ENCODE measurements at regions of chr2 and their contacts with region 1.

Region 1: GRCh38 chr2:219029829-219030165 is 11.5 kb downstream of the CFAP65 start:
- H3K4me3 ChIP-seq: no peak overlapping the region
- H3K27ac ChIP-seq: no peak overlapping the region
- H3K4me1 ChIP-seq: no peaks in the 10 kb centered on the region
- CTCF ChIP-seq: peak; percentile 93

Region 2: GRCh38 chr2:218995972-218996711 is 33.7 kb before region 1 on chr2:
- CTCF ChIA-PET with region 1: interaction called, 15 read pairs
- POLR2A ChIA-PET with region 1: no interaction called
- H3K4me3 ChIP-seq: peak overlapping the region; percentile 27
- H3K27ac ChIP-seq: no peak overlapping the region
- H3K4me1 ChIP-seq: no peaks in the 10 kb centered on the region
- CTCF ChIP-seq: peak; percentile 94

Region 3: GRCh38 chr2:219010162-219010756 is 19.5 kb before region 1 on chr2:
- CTCF ChIA-PET with region 1: interaction called, 13 read pairs
- POLR2A ChIA-PET with region 1: no interaction called
- H3K4me3 ChIP-seq: no peak overlapping the region
- H3K27ac ChIP-seq: no peak overlapping the region
- H3K4me1 ChIP-seq: no peaks in the 10 kb centered on the region
- CTCF ChIP-seq: peak; percentile 79

Region 4: GRCh38 chr2:219041252-219041651 is 11.5 kb after region 1 on chr2 and contains the start of gene CFAP65:
- CTCF ChIA-PET with region 1: interaction called, 31 read pairs
- POLR2A ChIA-PET with region 1: no interaction called
- H3K4me3 ChIP-seq: peak within 1 kb of the TSS; percentile 50
- H3K27ac ChIP-seq: no peak within 1 kb of the TSS
- H3K4me1 ChIP-seq: no peaks in the 10 kb centered on the region
- CTCF ChIP-seq: no peak

Region 5: DNA sequence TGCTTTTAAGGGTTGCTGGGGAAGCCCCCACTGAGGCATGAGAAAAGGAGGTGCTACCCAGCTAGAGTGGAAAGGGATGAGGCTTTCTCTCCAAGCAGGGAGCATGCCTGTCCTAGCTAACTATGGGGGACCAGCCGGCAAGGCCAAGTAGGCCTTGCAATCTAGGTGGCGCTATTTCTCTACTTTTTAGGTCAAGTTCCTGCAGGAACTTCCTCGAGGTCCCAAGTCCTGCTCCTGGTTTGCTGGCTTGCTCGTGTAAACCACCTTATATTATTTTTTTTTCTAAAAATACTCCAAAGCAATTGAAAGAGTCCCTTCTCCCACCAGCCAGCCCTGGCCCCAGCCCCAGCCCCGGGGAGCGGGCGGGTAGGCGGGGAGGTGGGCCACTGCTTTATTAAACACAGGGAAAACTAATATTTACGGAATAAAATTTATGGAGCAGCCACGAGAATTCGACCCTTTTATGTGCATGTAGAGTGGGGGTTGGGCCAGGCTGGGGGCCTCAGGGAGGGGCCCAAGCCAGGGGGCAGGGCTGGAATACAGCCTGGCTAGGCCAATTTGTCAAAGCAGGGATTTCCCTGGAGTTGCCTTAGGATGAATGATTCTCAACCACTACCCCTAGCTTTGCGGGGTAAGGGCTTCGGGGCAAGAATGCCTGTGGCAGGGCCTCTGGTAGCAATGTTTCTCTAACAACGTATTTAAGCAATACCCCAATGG is 43.8 kb after region 1 on chr2:
- CTCF ChIA-PET with region 1: interaction called, 25 read pairs
- POLR2A ChIA-PET with region 1: no interaction called
- H3K4me3 ChIP-seq: no peak overlapping the region
- H3K27ac ChIP-seq: no peak overlapping the region
- H3K4me1 ChIP-seq: no peaks in the 10 kb centered on the region
- CTCF ChIP-seq: no peak

Region 6: GRCh38 chr2:219104107-219105035 is 74.6 kb after region 1 on chr2:
- CTCF ChIA-PET with region 1: interaction called, 17 read pairs
- POLR2A ChIA-PET with region 1: no interaction called
- H3K4me3 ChIP-seq: no peak overlapping the region
- H3K27ac ChIP-seq: no peak overlapping the region
- H3K4me1 ChIP-seq: no peaks in the 10 kb centered on the region
- CTCF ChIP-seq: peak; percentile 31

Region 7: DNA sequence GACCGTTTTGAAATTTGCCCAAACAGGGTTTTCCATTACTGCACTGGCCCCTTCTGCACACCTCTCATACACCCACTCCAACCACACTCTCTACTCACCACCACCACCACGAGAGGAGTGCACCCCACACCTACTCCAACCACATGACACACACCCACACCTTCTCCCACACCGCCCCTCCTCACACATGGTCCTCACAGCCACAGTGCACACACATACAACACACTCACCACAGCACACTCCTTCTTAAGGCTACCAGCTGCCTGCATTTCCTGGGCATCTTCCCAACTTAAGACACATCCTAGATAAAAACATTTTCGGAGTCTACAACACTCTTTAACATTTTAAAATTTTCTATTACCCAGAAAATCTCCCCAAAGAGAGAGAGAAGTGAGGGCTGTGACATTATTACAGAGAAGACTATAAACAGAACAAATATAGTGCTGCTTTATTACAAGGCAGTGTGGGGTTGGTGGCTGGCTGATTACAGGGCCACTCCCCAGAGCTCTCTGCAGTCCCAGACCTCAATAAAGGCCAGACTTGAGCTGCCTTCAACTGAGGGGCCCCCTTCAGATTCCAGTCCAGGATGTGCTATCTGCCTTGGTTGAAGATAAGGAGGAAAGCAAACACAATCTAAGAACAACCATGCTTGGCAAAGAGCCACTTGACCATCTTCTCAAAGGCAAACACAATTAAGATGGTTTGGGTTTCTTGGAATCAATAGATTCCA is 94.7 kb after region 1 on chr2:
- CTCF ChIA-PET with region 1: interaction called, 45 read pairs
- POLR2A ChIA-PET with region 1: no interaction called
- H3K4me3 ChIP-seq: no peak overlapping the region
- H3K27ac ChIP-seq: peak overlapping the region; percentile 63; the same call in 1 of the 2 replicates
- H3K4me1 ChIP-seq: peaks cover 59% of the 10 kb centered on the region
- CTCF ChIP-seq: no peak

Region 8: DNA sequence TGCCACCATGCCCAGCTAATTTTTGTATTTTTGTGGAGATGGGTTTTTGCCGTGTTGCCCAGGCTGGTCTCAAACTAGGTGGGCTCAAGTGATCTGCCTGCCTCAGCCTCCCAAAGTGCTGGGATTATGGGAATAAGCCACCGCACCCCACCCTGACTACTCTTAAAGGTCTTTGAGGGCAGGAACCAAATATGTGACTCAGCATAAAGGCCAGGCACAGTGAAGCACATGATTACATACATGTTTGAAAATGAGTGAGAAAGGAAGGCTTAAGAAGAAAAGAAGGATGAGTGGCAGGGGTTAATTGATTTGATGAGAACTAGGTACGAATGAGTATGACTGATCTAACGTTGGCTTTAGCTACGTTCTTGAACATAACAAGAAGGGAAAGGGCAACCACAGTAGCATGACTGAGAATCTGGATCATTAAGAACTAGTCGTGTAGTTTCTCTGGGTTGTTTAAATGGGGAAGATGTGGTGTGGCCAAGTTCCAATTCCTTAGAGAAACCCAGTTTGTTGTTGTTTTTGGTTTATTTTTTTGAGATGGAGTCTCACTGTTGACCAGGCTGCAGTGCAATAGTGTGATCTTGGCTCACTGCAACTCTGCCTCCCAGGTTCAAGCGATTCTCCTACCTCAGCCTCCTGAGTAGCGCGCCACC is 296.0 kb after region 1 on chr2:
- CTCF ChIA-PET with region 1: no interaction called
- POLR2A ChIA-PET with region 1: no interaction called
- H3K4me3 ChIP-seq: no peak overlapping the region
- H3K27ac ChIP-seq: no peak overlapping the region
- H3K4me1 ChIP-seq: no peaks in the 10 kb centered on the region
- CTCF ChIP-seq: no peak

Measured in HEK293 (cell line).